ENCODE measurements at regions of chr15 and their contacts with region 1.

Region 1: DNA sequence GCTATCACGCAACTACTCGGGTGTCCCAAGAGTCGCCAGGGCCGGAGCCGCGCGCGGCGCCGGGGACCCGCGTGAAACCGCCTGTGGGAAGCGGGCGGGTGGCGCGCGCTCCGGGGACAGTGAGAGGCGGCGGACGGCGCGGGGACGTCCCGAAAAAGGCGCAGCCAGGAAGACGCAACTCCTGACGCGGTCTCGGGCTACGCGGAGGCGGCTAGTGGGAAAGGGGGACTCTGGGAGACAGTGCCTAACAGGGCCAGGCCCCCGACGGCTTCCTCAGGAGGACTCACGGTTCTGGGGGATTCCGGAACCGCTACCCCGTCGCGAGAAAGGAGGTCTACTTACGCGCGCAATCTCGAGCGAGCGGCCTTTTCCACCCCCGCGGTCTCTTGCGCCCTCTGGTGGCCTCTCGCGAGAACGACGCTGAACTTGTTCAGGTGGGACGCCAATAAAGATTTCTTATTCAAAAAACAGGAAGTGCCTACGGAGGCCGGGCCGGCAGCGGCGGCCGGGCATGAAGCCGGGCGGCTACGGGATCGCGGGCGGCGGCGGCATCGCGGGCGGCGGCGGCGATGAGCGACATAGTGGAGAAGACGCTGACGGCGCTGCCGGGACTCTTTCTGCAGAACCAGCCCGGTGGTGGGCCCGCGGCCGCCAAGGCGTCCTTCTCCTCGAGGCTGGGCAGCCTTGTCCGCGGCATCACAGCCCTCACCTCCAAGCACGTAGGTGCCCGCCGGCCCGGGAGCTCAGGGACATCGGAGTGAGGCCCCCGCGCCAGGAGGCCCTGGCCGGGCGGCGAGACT is at the start of gene AP4E1:
- DNase-seq: peak; percentile 79
- ATAC-seq: peak; percentile 74
- H3K4me3 ChIP-seq: peak within 1 kb of the TSS; percentile 99
- H3K27ac ChIP-seq: peak within 1 kb of the TSS; percentile 90
- H3K4me1 ChIP-seq: no peaks in the 10 kb centered on the region; the same call in 1 of the 2 replicates
- H3K27me3 ChIP-seq: no peaks in the 10 kb centered on the region
- CTCF ChIP-seq: peak; percentile 92 to 98 (median 96); a peak in 5 of 6 replicates
- EP300 ChIP-seq: peak; percentile 26 to 35; a peak in 1 of 4 replicates
- POLR2A ChIP-seq: peak; percentile 86
- RAD21 ChIP-seq: peak; percentile 95
- polyA plus RNA-seq, gene AP4E1: 1.2 to 1.6 TPM

Region 2: GRCh38 chr15:50176869-50177268 is 731.5 kb before region 1 on chr15:
- CTCF ChIA-PET with region 1: no interaction called
- POLR2A ChIA-PET with region 1: no interaction called
- RAD21 ChIA-PET with region 1: no interaction called
- SMC1A ChIA-PET with region 1: no interaction called
- in situ Hi-C with region 1: no loop called
- intact Hi-C with region 1: loop called (anchors 10 kb)
- DNase-seq: no peak
- ATAC-seq: no peak
- H3K4me3 ChIP-seq: no peak overlapping the region
- H3K27ac ChIP-seq: no peak overlapping the region
- H3K4me1 ChIP-seq: no peaks in the 10 kb centered on the region
- H3K27me3 ChIP-seq: 0 out of 4 replicates have a peak, but pooled peaks cover 0 to 4% of the 10 kb centered on the region in 2 experiments
- CTCF ChIP-seq: no peak
- EP300 ChIP-seq: no peak
- POLR2A ChIP-seq: no peak
- RAD21 ChIP-seq: no peak

Region 3: GRCh38 chr15:50675536-50676144 is 232.8 kb before region 1 on chr15:
- CTCF ChIA-PET with region 1: interaction called, 4 read pairs
- POLR2A ChIA-PET with region 1: no interaction called
- RAD21 ChIA-PET with region 1: interaction called, 3 read pairs
- SMC1A ChIA-PET with region 1: interaction called, 3 read pairs
- in situ Hi-C with region 1: loop called (anchors 5 kb)
- intact Hi-C with region 1: loop called (anchors 1 kb)
- DNase-seq: peak; percentile 5
- ATAC-seq: peak; percentile 64
- H3K4me3 ChIP-seq: no peak overlapping the region
- H3K27ac ChIP-seq: no peak overlapping the region
- H3K4me1 ChIP-seq: peaks cover 5% of the 10 kb centered on the region
- H3K27me3 ChIP-seq: no peaks in the 10 kb centered on the region
- CTCF ChIP-seq: peak; percentile 51 to 65 (median 58)
- EP300 ChIP-seq: no peak
- POLR2A ChIP-seq: no peak
- RAD21 ChIP-seq: peak; percentile 58

Region 4: GRCh38 chr15:50765195-50765973 is 143.0 kb before region 1 on chr15 and contains the start of gene SPPL2A:
- CTCF ChIA-PET with region 1: no interaction called
- POLR2A ChIA-PET with region 1: no interaction called
- RAD21 ChIA-PET with region 1: no interaction called
- SMC1A ChIA-PET with region 1: no interaction called
- in situ Hi-C with region 1: no loop called
- intact Hi-C with region 1: loop called (anchors 2 kb)
- DNase-seq: no peak
- ATAC-seq: peak; percentile 96
- H3K4me3 ChIP-seq: peak within 1 kb of the TSS; percentile 88
- H3K27ac ChIP-seq: peak within 1 kb of the TSS; percentile 93
- H3K4me1 ChIP-seq: peaks cover 10% of the 10 kb centered on the region
- H3K27me3 ChIP-seq: no peaks in the 10 kb centered on the region
- CTCF ChIP-seq: no peak
- EP300 ChIP-seq: no peak
- POLR2A ChIP-seq: peak; percentile 94
- RAD21 ChIP-seq: no peak
- polyA plus RNA-seq, gene SPPL2A: 11.3 to 24.2 TPM

Region 5: DNA sequence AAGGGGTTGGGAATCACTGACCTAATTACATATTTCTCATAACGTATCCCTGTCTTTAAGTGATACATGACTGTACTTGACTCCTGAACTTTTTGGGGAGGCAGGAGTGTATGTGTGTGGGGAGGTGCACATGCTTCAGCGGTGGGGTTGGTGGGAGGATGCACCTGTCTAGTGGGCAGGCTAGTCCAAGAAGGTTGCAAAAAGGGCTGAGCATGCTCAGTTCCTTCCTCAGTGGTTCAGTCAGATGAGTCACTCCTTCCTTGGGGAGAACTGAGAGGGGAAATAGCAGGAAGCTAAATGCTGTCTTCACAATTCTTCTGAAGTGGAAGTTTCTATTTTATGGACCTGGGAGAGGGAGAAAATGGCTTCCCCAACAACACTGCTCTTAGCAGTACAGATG is 24.5 kb before region 1 on chr15:
- CTCF ChIA-PET with region 1: interaction called, 27 read pairs
- POLR2A ChIA-PET with region 1: interaction called, 10 read pairs
- RAD21 ChIA-PET with region 1: interaction called, 25 read pairs
- SMC1A ChIA-PET with region 1: interaction called, 33 read pairs
- in situ Hi-C with region 1: no loop called
- intact Hi-C with region 1: loop called (anchors 1 kb)
- DNase-seq: peak; percentile 55
- ATAC-seq: no peak
- H3K4me3 ChIP-seq: no peak overlapping the region
- H3K27ac ChIP-seq: peak overlapping the region; percentile 4; the same call in 1 of the 2 replicates
- H3K4me1 ChIP-seq: peaks cover 56% of the 10 kb centered on the region
- H3K27me3 ChIP-seq: no peaks in the 10 kb centered on the region
- CTCF ChIP-seq: no peak
- EP300 ChIP-seq: no peak
- POLR2A ChIP-seq: no peak
- RAD21 ChIP-seq: no peak

Region 6: DNA sequence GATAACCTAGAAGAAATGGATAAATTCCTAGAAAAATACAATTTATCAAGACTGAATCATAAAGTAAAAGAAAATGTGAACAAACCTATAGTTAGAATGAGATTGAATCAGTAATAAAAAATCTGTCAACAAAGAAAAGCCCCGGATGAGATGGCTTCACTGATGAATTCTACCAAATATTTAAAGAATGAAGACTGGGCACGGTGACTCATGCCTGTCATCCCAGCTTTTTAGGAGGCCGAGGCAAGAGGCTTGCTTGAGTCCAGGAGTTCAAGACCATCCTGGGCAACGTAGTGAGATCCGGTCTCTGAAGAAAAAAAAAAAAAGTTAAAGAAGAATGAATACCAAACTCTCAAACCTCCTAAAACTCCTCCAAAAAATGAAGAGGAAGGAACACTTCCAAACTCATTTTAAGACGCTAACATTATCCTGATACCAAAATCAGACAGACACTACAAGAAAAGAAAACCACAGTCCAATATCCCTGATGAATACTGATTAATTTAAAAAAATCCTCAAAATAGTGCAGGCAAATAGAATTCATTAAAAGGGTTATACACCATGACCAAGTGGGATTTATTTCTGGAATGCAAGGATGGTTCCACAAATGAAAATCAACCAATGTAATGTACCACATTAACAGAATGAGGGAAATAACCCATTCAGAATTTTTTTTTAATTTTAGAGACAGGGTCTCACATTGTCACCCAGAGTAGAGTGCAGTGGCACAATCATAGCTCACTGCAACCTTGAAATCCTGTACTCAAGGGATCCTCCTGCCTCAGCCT is 17.4 kb before region 1 on chr15:
- CTCF ChIA-PET with region 1: interaction called, 27 read pairs
- POLR2A ChIA-PET with region 1: interaction called, 10 read pairs
- RAD21 ChIA-PET with region 1: interaction called, 12 read pairs
- SMC1A ChIA-PET with region 1: interaction called, 27 read pairs
- in situ Hi-C with region 1: no loop called
- intact Hi-C with region 1: no loop called
- DNase-seq: no peak
- ATAC-seq: no peak
- H3K4me3 ChIP-seq: no peak overlapping the region
- H3K27ac ChIP-seq: no peak overlapping the region
- H3K4me1 ChIP-seq: peaks cover 6% of the 10 kb centered on the region; the same call in 1 of the 2 replicates
- H3K27me3 ChIP-seq: no peaks in the 10 kb centered on the region
- CTCF ChIP-seq: no peak
- EP300 ChIP-seq: no peak
- POLR2A ChIP-seq: no peak
- RAD21 ChIP-seq: no peak

Region 7: GRCh38 chr15:50940506-50940905 is 32.1 kb after region 1 on chr15:
- CTCF ChIA-PET with region 1: no interaction called
- POLR2A ChIA-PET with region 1: no interaction called
- RAD21 ChIA-PET with region 1: no interaction called
- SMC1A ChIA-PET with region 1: no interaction called
- in situ Hi-C with region 1: no loop called
- intact Hi-C with region 1: no loop called
- DNase-seq: no peak
- ATAC-seq: no peak
- H3K4me3 ChIP-seq: no peak overlapping the region
- H3K27ac ChIP-seq: no peak overlapping the region
- H3K4me1 ChIP-seq: no peaks in the 10 kb centered on the region
- H3K27me3 ChIP-seq: no peaks in the 10 kb centered on the region
- CTCF ChIP-seq: no peak
- EP300 ChIP-seq: no peak
- POLR2A ChIP-seq: no peak
- RAD21 ChIP-seq: no peak